MCF 10A (cell line): ENCODE measurements at regions of chr1 and their contacts with region 1.

Region 1: GRCh38 chr1:216119602-216120001 is 303.6 kb downstream of the USH2A start:
- DNase-seq: peak; percentile 62
- H3K4me3 Mint-ChIP-seq: no peak overlapping the region
- H3K27ac Mint-ChIP-seq: no peak overlapping the region
- H3K4me1 Mint-ChIP-seq: no peaks in the 10 kb centered on the region
- H3K27me3 Mint-ChIP-seq: peaks cover 82% of the 10 kb centered on the region
- CTCF ChIP-seq: peak; percentile 80

Region 2: DNA sequence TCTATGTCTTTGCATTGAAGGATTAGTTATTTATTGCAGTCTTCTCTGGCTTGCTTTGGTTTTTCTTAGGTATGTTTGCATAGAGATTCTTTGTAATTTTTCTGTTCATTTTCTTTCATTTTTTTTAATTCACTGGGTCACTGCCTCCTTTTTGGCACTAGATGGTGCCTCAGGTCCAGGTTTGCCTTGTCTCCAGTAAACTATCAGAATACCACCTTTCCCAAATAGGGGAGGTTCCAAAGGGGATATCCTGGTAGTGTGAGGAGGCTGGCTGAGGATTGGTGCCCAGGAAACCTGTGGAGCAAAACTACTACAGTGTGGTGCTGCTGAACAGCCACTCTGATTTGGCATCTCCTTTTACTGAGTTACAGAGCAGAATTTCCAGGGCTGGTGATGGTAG is 295.4 kb before region 1 on chr1:
- CTCF ChIA-PET with region 1: no interaction called
- POLR2A ChIA-PET with region 1: no interaction called
- intact Hi-C with region 1: loop called (anchors 2 kb)
- DNase-seq: peak; percentile 32
- H3K4me3 Mint-ChIP-seq: no peak overlapping the region
- H3K27ac Mint-ChIP-seq: no peak overlapping the region
- H3K4me1 Mint-ChIP-seq: no peaks in the 10 kb centered on the region
- H3K27me3 Mint-ChIP-seq: peaks cover 96% of the 10 kb centered on the region
- CTCF ChIP-seq: peak; percentile 64

Region 3: GRCh38 chr1:215992620-215993019 is 127.0 kb before region 1 on chr1:
- CTCF ChIA-PET with region 1: interaction called, 3 read pairs
- POLR2A ChIA-PET with region 1: no interaction called
- intact Hi-C with region 1: loop called (anchors 1 kb)
- DNase-seq: peak; percentile 63
- H3K4me3 Mint-ChIP-seq: no peak overlapping the region
- H3K27ac Mint-ChIP-seq: no peak overlapping the region
- H3K4me1 Mint-ChIP-seq: no peaks in the 10 kb centered on the region
- H3K27me3 Mint-ChIP-seq: peaks cover 75% of the 10 kb centered on the region
- CTCF ChIP-seq: peak; percentile 69

Region 4: GRCh38 chr1:216285052-216285451 is 165.4 kb after region 1 on chr1:
- CTCF ChIA-PET with region 1: no interaction called
- POLR2A ChIA-PET with region 1: no interaction called
- intact Hi-C with region 1: no loop called
- DNase-seq: no peak
- H3K4me3 Mint-ChIP-seq: no peak overlapping the region
- H3K27ac Mint-ChIP-seq: no peak overlapping the region
- H3K4me1 Mint-ChIP-seq: no peaks in the 10 kb centered on the region
- H3K27me3 Mint-ChIP-seq: peaks cover 52% of the 10 kb centered on the region
- CTCF ChIP-seq: no peak

Region 5: DNA sequence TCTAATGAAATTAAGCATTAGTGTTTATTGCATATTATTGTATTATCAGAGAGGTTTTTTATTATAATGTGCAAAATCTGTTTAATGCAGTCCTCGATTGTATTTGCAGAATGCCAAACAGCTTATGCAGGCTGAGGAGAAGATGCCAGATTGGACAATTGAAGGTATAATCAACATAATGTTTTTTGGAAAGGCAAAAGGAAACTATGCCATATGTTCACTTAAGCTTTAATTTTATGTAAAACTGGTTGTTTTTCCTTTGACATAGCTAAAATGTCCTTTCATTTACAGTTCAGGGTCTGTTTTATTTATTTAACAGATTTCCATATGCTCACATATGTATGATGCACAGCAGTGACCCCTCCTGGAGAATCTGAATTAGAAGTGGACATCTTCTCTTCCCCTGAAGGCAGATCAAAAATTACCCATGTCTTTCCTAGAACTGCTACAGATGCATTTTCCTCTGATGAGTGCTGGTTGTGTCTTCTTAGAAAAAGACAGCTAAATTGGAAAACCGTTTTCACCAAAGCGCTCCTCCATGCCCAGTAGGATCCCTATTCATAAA is 447.1 kb after region 1 on chr1:
- CTCF ChIA-PET with region 1: no interaction called
- POLR2A ChIA-PET with region 1: no interaction called
- intact Hi-C with region 1: loop called (anchors 10 kb)
- DNase-seq: peak; percentile 58
- H3K4me3 Mint-ChIP-seq: no peak overlapping the region
- H3K27ac Mint-ChIP-seq: no peak overlapping the region
- H3K4me1 Mint-ChIP-seq: no peaks in the 10 kb centered on the region
- H3K27me3 Mint-ChIP-seq: peaks cover 93% of the 10 kb centered on the region
- CTCF ChIP-seq: peak; percentile 66